ENCODE measurements at regions of chr1 and their contacts with region 1.

Region 1: GRCh38 chr1:27638047-27638734 is 3.2 kb upstream of the FGR start:
- DNase-seq: no peak
- H3K4me3 ChIP-seq: no peak overlapping the region
- H3K27ac ChIP-seq: no peak overlapping the region
- H3K4me1 ChIP-seq: peaks cover 6% of the 10 kb centered on the region
- H3K27me3 ChIP-seq: no peaks in the 10 kb centered on the region
- CTCF ChIP-seq: no peak

Region 2: DNA sequence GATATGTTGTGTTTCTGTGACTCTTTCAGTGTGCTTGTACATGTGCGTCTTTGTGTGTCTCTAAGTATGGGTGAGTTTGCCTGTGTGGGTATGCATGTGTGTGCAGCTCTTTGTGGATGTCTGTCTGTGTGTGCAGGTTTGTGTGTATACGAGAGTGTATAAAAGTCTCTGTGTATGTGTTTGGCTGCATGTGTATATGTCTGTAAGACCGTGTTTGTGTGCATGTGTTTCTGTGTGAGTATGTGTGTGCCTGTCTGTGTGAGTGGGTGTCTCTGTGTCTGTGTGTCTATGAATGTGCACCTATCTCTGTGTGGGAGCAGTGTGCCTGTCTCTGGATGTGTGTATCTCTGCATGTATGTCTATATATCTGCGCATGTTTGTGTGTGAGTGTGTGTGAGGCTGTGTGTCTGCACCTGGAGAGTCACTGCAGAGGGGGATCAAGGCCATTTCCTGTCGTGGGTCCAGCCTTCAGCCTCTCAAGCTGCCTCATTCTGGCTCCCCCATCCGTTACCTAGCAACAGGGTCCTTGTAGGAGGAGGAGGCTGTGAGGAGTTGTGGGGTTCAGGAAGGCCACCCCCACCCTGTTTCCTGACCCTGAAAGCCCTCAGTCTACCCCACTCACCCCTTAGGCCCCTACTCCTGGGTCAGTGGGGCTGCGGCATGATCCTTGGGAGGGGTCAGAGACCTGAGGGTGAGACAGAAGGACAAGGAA is 13.6 kb before region 1 on chr1:
- CTCF ChIA-PET with region 1: interaction called, 7 read pairs
- dilution Hi-C with region 1: no loop called
- in situ Hi-C with region 1: no loop called
- intact Hi-C with region 1: loop called (anchors 2 kb)
- DNase-seq: no peak
- H3K4me3 ChIP-seq: no peak overlapping the region
- H3K27ac ChIP-seq: peak overlapping the region; percentile 23
- H3K4me1 ChIP-seq: peaks cover 17% of the 10 kb centered on the region
- H3K27me3 ChIP-seq: no peaks in the 10 kb centered on the region
- CTCF ChIP-seq: no peak